ENCODE measurements at regions of chr14 and their contacts with region 1.

Region 1: DNA sequence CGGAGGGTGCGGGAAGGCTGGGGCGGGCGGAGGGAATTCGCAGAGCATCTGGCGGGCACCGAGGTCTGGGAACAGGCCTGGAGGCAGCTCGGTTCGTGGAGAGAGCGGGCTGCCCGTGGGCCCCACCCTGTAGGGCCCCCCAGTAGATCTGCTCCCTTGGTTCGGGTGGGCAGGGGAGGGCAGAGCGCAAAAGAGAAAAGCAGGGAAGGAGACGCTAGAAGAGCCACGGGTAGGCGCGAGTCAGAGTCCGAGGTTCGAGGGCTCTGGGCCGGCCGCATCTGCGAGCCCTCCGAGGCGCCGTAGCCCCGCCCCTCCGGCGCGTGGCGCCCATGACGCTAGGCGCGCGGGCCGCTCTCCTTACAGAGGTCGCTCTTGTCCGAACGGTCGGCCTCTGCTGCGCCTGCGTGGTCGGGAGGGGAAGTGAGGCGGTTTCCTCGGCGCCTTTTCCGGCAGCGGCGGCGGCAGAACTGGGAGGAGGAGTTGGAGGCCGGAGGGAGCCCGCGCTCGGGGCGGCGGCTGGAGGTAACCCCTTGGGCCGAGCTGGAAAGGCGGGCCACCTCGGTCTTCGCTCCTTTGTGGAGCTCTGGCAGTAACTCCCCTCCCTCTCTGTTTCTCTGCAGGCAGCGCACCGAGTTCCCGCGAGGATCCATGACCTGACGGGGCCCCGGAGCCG is at the start of gene ARF6:
- DNase-seq: peak; percentile 97
- ATAC-seq: peak; percentile 83 to 95 (median 88)
- H3K4me3 ChIP-seq: peak within 1 kb of the TSS; percentile 93
- H3K4me3 Mint-ChIP-seq: peak within 1 kb of the TSS; percentile 100
- H3K27ac ChIP-seq: peak within 1 kb of the TSS; percentile 98
- H3K27ac Mint-ChIP-seq: peak within 1 kb of the TSS; percentile 98 to 100
- H3K4me1 ChIP-seq: peaks cover 10% of the 10 kb centered on the region
- H3K4me1 Mint-ChIP-seq: peaks cover 43 to 47% of the 10 kb centered on the region in 2 donors
- H3K27me3 ChIP-seq: no peaks in the 10 kb centered on the region
- H3K27me3 Mint-ChIP-seq: no peaks in the 10 kb centered on the region
- CTCF ChIP-seq: peak; percentile 16
- total RNA-seq, gene ARF6: 124 to 132 (median 128) TPM

Region 2: DNA sequence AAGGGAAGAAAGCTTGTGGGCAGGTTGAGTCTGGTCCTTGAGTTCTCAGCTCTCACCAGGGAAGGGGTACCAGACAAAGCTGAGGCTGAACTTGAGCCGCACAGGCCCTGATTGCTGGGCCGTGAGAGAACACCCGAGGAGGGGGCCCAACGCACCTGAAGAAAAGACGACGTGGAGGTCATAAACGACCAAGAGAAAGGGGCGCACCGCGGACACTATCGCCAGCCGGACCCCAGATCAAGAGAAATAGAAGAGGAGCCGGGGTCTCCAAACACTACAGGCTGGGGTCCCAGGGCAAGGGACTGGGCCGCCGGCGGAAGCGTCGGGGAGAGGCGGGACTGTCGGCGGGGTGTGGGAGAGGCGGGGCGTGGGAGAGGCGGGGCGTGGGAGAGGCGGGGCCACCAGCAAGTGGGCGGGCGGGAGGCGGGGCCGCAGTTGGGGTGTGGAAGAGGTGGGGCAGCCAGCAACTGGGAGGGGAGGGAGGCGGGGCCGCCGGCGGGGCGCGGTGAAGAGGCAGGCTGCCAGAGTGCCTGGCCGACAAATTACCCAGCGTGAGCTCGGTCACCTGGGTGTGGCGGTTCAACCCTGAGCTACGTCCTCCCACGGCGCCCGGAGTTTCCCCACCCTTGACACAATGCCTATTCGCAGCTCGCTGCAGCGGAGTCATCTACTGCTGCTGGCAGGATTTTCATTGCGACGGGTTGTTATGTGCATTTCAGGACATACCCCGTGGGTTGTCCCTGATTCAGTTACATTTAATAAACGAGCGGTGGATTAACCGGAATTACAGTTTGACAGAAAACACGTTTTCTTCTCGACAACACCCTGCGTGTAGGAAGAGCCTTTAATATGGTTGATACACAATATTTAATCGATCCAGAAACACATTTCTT is 24.7 kb before region 1 on chr14:
- intact Hi-C with region 1: loop called (anchors 1 kb)
- DNase-seq: peak; percentile 94 to 98
- ATAC-seq: peak; percentile 86 to 97 (median 92)
- H3K4me3 ChIP-seq: peak overlapping the region; percentile 48
- H3K4me3 Mint-ChIP-seq: peak overlapping the region; percentile 92
- H3K27ac ChIP-seq: peak overlapping the region; percentile 93
- H3K27ac Mint-ChIP-seq: peak overlapping the region; percentile 94 to 100
- H3K4me1 ChIP-seq: peaks cover 33% of the 10 kb centered on the region
- H3K4me1 Mint-ChIP-seq: peaks cover 15 to 18% of the 10 kb centered on the region in 2 donors
- H3K27me3 ChIP-seq: no peaks in the 10 kb centered on the region
- H3K27me3 Mint-ChIP-seq: no peaks in the 10 kb centered on the region
- CTCF ChIP-seq: no peak

Region 3: DNA sequence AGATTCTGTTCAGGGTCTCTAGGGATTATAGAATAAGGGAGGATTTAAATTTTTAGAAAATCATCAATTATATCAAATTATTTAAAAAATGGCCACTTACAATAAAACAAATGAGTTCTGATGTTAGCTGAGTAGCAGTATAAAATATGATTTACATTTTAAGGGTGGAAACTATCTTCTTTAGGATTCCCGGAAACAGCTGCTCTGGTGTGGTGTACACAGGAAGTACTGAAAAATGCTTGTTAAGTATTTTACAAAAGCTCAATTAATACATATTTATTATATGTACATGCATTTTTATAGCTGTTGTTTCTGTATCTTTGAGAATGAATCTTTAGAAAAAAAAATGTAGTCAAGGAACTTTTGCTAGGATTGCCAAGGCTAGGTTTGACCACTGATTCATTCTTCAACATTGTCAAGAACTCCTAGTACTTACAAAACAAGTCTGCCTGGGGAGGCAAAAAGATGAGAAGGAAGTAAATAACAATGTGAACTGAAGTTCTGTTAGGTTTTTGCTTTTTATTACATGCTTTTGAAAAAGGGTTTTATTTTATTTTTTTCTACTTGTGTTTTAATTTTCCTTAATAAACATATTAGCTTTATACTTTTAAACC is 48.1 kb after region 1 on chr14:
- intact Hi-C with region 1: loop called (anchors 2 kb)
- DNase-seq: peak in 1 of 2 donors; percentile 55
- ATAC-seq: peak; percentile 64 to 77 (median 72)
- H3K4me3 ChIP-seq: no peak overlapping the region
- H3K4me3 Mint-ChIP-seq: peak overlapping the region; percentile 68
- H3K27ac ChIP-seq: peak overlapping the region; percentile 66
- H3K27ac Mint-ChIP-seq: peak overlapping the region; percentile 87 to 88
- H3K4me1 ChIP-seq: peaks cover 25% of the 10 kb centered on the region
- H3K4me1 Mint-ChIP-seq: peaks cover 55 to 56% of the 10 kb centered on the region in 2 donors
- H3K27me3 ChIP-seq: no peaks in the 10 kb centered on the region
- H3K27me3 Mint-ChIP-seq: no peaks in the 10 kb centered on the region
- CTCF ChIP-seq: no peak

Region 4: DNA sequence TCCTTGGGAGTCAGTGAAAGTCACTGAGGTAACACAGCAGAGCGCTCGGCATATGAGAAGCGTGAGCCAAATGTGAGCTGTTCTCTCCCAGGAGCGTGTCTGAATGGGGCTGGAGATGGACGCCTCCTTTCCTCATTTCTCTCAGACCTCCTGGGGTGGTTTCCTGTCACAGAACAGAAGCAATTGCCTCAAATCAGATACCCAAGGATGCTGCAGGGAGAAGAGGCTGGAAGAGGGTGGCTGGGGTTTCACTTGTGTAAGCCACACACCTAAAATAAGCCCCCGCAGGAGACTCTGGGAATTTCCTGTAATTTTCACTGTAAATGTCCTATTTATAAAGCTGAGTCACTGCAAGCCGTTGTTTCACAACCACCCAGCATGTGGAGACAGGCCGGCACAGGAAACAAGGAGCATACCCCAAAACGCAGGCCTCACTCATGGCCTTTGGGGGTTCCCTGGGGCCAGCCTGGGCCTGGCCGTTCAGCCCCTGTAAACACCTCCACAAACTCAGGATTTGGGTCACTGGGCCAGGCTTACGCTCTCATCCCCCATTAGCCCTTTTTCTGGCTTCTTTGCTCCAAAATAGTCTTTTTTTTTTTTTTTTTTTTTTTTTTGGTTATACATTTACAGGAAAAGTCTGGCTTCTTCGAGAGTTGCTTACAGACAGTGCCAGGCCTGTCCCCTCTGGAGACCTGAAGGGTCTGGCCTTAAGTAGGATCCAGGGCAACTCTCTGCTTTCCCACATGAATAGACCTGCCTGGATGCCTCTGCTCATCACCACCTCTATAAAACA is 168.3 kb after region 1 on chr14:
- intact Hi-C with region 1: loop called (anchors 1 kb)
- DNase-seq: peak; percentile 56 to 72
- ATAC-seq: peak; percentile 31 to 46 (median 35)
- H3K4me3 ChIP-seq: no peak overlapping the region
- H3K4me3 Mint-ChIP-seq: peak overlapping the region; percentile 82
- H3K27ac ChIP-seq: peak overlapping the region; percentile 92
- H3K27ac Mint-ChIP-seq: peak overlapping the region; percentile 93 to 95
- H3K4me1 ChIP-seq: peaks cover 81% of the 10 kb centered on the region
- H3K4me1 Mint-ChIP-seq: peaks cover 76 to 83% of the 10 kb centered on the region in 2 donors
- H3K27me3 ChIP-seq: no peaks in the 10 kb centered on the region
- H3K27me3 Mint-ChIP-seq: no peaks in the 10 kb centered on the region
- CTCF ChIP-seq: no peak

Region 5: GRCh38 chr14:50085570-50086320 is 193.0 kb after region 1 on chr14:
- intact Hi-C with region 1: loop called (anchors 2 kb)
- DNase-seq: peak; percentile 36 to 70
- ATAC-seq: peak; percentile 53 to 66 (median 56)
- H3K4me3 ChIP-seq: no peak overlapping the region
- H3K4me3 Mint-ChIP-seq: peak overlapping the region; percentile 14
- H3K27ac ChIP-seq: peak overlapping the region; percentile 95
- H3K27ac Mint-ChIP-seq: peak overlapping the region; percentile 86 to 87
- H3K4me1 ChIP-seq: peaks cover 72% of the 10 kb centered on the region
- H3K4me1 Mint-ChIP-seq: peaks cover 62 to 66% of the 10 kb centered on the region in 2 donors
- H3K27me3 ChIP-seq: no peaks in the 10 kb centered on the region
- H3K27me3 Mint-ChIP-seq: no peaks in the 10 kb centered on the region
- CTCF ChIP-seq: no peak

Region 6: DNA sequence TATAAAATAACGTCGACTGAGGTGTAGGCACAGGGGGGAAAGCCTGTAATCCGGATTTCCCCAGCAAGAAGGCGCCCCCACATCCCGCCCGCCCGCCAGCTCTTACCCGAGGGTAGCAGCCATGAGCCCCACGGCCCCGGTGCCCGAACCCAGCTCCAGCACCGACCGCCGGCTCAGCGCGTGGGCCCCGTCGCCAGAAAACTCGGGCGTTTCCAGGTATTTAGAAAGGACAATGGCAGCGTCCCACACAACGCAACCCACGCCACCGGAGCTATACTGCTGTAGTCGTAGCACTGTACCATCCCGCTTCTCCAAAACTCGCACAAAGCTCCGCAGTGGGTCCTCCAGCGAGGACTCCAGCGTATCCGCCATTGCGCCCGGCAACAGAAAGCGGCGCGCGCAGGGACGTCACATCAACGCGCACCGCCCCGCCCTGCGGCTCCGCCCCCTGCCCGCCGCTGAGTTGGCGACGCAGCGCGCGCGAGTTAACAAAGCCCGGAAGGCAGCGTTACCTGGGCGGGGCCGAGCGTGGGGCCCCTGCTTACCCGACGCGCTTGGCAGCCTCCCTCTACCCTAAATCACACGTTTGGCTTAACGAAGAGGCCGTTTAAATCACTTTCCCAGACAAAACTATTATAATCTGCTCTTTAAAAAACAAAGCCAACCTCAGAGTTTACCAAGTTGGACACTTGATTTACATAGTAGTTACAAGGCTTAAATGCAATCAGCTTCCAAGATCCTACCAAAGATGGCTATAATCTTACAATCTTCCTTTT is 223.6 kb after region 1 on chr14 and contains the start of gene VCPKMT:
- intact Hi-C with region 1: loop called (anchors 5 kb)
- DNase-seq: peak; percentile 97 to 98
- ATAC-seq: peak; percentile 97 to 100 (median 97)
- H3K4me3 ChIP-seq: peak within 1 kb of the TSS; percentile 99
- H3K4me3 Mint-ChIP-seq: peak within 1 kb of the TSS; percentile 95
- H3K27ac ChIP-seq: peak within 1 kb of the TSS; percentile 99
- H3K27ac Mint-ChIP-seq: peak within 1 kb of the TSS; percentile 96 to 97
- H3K4me1 ChIP-seq: peaks cover 8% of the 10 kb centered on the region
- H3K4me1 Mint-ChIP-seq: peaks cover 14% of the 10 kb centered on the region in 2 donors
- H3K27me3 ChIP-seq: no peaks in the 10 kb centered on the region
- H3K27me3 Mint-ChIP-seq: no peaks in the 10 kb centered on the region
- CTCF ChIP-seq: no peak
- total RNA-seq, gene VCPKMT: 19.4 to 23.9 (median 21.8) TPM